ENCODE measurements at regions of chr18 and their contacts with region 1.

Region 1: DNA sequence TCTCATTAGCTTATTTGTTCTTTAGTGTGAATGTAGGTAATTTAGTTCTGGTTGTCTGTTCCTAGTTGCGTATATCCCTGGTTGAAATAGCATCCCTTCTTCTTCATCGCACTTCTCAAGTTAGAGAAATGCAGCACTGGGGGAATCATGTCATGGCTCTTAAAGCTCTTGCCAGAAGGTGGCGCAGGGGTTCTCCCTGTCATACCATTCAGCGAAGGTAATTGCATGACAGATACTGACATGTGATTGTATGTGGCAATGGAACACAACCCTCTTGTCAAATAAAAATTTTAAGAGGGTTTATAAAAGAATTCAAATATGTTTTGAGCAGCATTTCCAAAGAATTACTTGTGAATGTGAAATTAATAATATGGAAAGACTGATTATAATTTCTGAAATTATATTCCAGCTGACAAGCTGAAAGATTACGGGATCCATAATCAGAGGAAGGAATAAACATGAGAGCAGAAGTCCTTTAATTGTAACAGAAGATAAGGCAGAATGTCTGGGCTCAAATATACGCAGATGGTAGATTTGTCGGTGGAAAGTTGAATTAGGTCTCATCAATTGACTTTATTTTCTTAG is 411.7 kb downstream of the DSEL start:
- DNase-seq: no peak
- H3K4me3 ChIP-seq: no peak overlapping the region
- H3K27ac ChIP-seq: no peak overlapping the region
- H3K4me1 ChIP-seq: no peaks in the 10 kb centered on the region
- H3K27me3 ChIP-seq: no peaks in the 10 kb centered on the region
- CTCF ChIP-seq: peak in 3 of 4 experiments; percentile 5 to 36 (median 20)
- EP300 ChIP-seq: no peak
- POLR2A ChIP-seq: no peak

Region 2: DNA sequence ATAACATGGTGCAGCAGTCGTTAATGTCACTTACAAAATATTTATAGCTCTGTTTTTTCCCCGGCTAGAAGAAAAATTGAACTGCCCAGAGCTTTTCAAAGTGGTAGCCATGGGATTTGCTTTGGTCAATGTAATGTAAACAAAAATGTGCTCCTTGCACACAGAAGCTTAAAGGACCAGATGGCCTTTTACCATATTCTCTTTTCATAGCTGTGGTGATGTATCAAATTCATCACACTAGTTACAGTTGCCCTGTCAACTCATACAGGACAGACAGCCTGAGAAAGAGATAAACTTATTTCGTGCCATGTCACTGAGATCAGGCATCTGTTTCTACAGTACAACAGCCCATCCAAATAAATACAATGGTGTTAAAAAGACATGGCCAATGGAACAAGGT is 132.8 kb before region 1 on chr18:
- intact Hi-C with region 1: no loop called
- DNase-seq: no peak
- H3K4me3 ChIP-seq: no peak overlapping the region
- H3K27ac ChIP-seq: no peak overlapping the region
- H3K4me1 ChIP-seq: no peaks in the 10 kb centered on the region
- H3K27me3 ChIP-seq: no peaks in the 10 kb centered on the region
- CTCF ChIP-seq: no peak
- EP300 ChIP-seq: no peak
- POLR2A ChIP-seq: no peak

Region 3: DNA sequence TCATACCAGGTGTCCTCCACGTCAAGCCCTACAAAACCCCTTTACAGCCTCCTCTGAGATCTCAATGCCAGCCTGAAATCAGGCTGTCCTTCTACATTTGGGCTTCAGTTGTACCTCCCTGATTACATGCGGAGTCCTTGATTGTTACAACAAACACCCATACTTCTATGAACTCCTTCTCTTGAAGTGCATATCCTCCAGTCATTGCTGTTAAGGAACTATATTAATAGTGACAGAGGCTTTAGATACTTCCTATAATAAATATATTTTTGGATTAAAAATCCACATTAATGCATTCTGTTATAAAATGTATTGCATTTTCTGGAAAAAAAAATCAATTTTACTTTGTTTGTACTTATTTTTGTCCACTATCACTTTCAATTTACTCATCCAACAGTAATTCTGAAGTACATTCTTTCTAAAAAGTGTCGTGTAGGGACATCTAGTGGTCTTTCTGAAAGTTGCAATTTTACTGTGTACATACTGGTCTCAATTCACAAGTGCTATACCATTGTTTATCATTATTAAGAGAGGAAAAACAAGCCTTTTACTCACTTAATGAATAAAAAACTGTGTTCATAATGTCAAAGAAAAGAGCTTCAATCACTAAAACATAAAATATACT is 95.3 kb after region 1 on chr18:
- intact Hi-C with region 1: loop called (anchors 2 kb)
- DNase-seq: no peak
- H3K4me3 ChIP-seq: no peak overlapping the region
- H3K27ac ChIP-seq: no peak overlapping the region
- H3K4me1 ChIP-seq: no peaks in the 10 kb centered on the region
- H3K27me3 ChIP-seq: no peaks in the 10 kb centered on the region
- CTCF ChIP-seq: peak in 3 of 4 experiments; percentile 23 to 59 (median 33)
- EP300 ChIP-seq: no peak
- POLR2A ChIP-seq: no peak

Region 4: GRCh38 chr18:67553471-67553870 is 448.7 kb after region 1 on chr18:
- intact Hi-C with region 1: no loop called
- DNase-seq: no peak
- H3K4me3 ChIP-seq: no peak overlapping the region
- H3K27ac ChIP-seq: no peak overlapping the region
- H3K4me1 ChIP-seq: peaks cover 0 to 11% (median 4%) of the 10 kb centered on the region in 4 donors
- H3K27me3 ChIP-seq: no peaks in the 10 kb centered on the region
- CTCF ChIP-seq: no peak
- EP300 ChIP-seq: no peak
- POLR2A ChIP-seq: no peak

Measured in sigmoid colon (tissue), 7 donors.